ENCODE measurements at regions of chr2 and their contacts with region 1.

Region 1: GRCh38 chr2:74472086-74472944 is at the start of gene MRPL53:
- DNase-seq: peak; percentile 90 to 99 (median 95)
- ATAC-seq: peak; percentile 93 to 96 (median 94)
- H3K4me3 ChIP-seq: peak within 1 kb of the TSS; percentile 66 to 73
- H3K4me3 Mint-ChIP-seq: peak within 1 kb of the TSS; percentile 90 to 96 (median 96)
- H3K27ac ChIP-seq: peak within 1 kb of the TSS; percentile 88
- H3K27ac Mint-ChIP-seq: peak within 1 kb of the TSS; percentile 95 to 99
- H3K4me1 ChIP-seq: peaks cover 13 to 27% of the 10 kb centered on the region in 2 experiments
- H3K4me1 Mint-ChIP-seq: peaks cover 21 to 30% (median 24%) of the 10 kb centered on the region in 3 donors
- H3K27me3 ChIP-seq: no peaks in the 10 kb centered on the region
- H3K27me3 Mint-ChIP-seq: no peaks in the 10 kb centered on the region
- total RNA-seq, gene MRPL53: 53.9 to 77.9 (median 59.4) TPM

Region 2: DNA sequence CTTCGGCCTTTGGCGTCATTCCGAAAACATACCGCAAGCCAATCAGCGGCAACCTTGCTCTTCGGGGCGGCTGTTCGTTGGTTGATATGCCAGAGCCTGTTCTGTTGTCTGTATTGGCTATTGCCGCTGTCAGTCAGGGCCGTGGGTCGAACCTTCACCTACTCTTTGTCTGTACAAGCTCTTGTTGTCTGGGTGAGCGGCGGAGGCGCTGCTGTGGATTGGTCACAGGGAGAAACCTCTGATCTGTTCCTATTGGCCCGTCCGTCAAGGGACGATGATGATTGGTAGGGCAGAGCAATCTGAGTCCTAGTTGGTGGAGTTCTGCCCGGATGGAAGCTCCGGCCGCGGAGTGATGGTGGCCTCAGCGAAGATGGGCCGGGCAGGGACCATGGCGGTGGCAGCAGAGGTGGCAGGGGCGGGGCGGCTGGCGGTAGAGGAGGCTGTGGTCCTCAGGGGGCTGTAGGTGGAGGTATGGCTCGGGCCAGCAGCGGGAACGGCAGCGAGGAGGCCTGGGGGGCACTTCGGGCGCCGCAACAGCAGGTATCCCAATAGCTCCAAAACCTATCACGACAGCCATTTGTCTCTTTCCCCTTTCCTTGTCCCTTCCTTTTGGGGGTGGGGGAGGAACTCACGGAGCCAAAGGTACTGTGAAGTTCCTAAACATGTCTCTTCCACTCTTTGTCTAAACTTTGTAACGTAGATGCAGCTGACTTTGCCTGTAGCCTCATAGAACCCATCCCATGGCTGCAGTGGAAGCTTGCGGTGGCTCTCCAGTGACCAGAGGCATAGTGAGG is 14.0 kb before region 1 on chr2 and contains the start of gene WBP1:
- CTCF ChIA-PET with region 1: interaction called, 4 to 13 read pairs
- POLR2A ChIA-PET with region 1: interaction called, 5 to 15 read pairs
- DNase-seq: peak; percentile 96 to 100 (median 100)
- ATAC-seq: peak; percentile 82 to 84 (median 82)
- H3K4me3 ChIP-seq: peak within 1 kb of the TSS; percentile 93 to 96
- H3K4me3 Mint-ChIP-seq: peak within 1 kb of the TSS; percentile 93 to 99 (median 97)
- H3K27ac ChIP-seq: peak within 1 kb of the TSS; percentile 99
- H3K27ac Mint-ChIP-seq: peak within 1 kb of the TSS; percentile 99
- H3K4me1 ChIP-seq: peaks cover 32 to 44% of the 10 kb centered on the region in 2 experiments
- H3K4me1 Mint-ChIP-seq: peaks cover 59 to 71% (median 64%) of the 10 kb centered on the region in 3 donors
- H3K27me3 ChIP-seq: no peaks in the 10 kb centered on the region
- H3K27me3 Mint-ChIP-seq: no peaks in the 10 kb centered on the region
- total RNA-seq, gene WBP1: 80.2 to 104 (median 98.2) TPM